CD8-positive, alpha-beta memory T cell (primary cell): ENCODE measurements at regions of chr11 and their contacts with region 1.

Region 1: GRCh38 chr11:114262681-114263512 is 33.3 kb upstream of the NNMT start:
- DNase-seq: peak in 3 of 5 donors; percentile 17 to 58 (median 21)
- H3K4me3 ChIP-seq: no peak overlapping the region
- H3K4me3 Mint-ChIP-seq: no peak overlapping the region
- H3K27ac ChIP-seq: no peak overlapping the region
- H3K27ac Mint-ChIP-seq: no peak overlapping the region
- H3K4me1 ChIP-seq: no peaks in the 10 kb centered on the region
- H3K4me1 Mint-ChIP-seq: peaks cover 0 to 6% (median 4%) of the 10 kb centered on the region in 3 donors
- H3K27me3 ChIP-seq: no peaks in the 10 kb centered on the region
- H3K27me3 Mint-ChIP-seq: peaks cover 4 to 6% of the 10 kb centered on the region in 2 donors

Region 2: GRCh38 chr11:113896156-113896879 is 366.6 kb before region 1 on chr11:
- CTCF ChIA-PET with region 1: interaction called, 152 read pairs
- POLR2A ChIA-PET with region 1: no interaction called
- DNase-seq: peak in 2 of 5 donors; percentile 11 to 18
- H3K4me3 ChIP-seq: no peak overlapping the region
- H3K4me3 Mint-ChIP-seq: peak overlapping the region in 1 of 7 donors; percentile 27
- H3K27ac ChIP-seq: no peak overlapping the region
- H3K27ac Mint-ChIP-seq: no peak overlapping the region
- H3K4me1 ChIP-seq: no peaks in the 10 kb centered on the region
- H3K4me1 Mint-ChIP-seq: peaks cover 2 to 5% (median 4%) of the 10 kb centered on the region in 3 donors
- H3K27me3 ChIP-seq: no peaks in the 10 kb centered on the region
- H3K27me3 Mint-ChIP-seq: peaks cover 0 to 2% of the 10 kb centered on the region in 2 donors

Region 3: DNA sequence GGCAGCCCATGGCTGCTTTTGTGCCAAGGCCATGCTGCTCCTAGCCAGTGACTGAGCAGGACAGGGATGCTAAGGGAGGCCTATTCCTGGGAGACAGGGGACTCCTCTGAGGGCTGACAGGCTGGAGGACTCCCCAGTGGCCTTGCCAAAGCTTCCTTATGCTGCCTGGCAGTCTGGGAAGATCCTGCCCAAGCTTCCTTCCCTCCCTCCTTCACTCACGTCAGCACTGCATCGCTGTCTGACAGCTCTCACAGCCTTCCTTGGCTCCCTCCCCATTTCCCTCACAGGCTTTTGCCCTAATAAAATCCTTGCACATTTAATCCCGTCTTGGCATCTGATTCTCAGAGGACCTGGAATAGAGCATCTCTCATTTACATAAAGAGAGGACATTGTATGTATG is 261.5 kb before region 1 on chr11:
- CTCF ChIA-PET with region 1: interaction called, 149 read pairs
- POLR2A ChIA-PET with region 1: no interaction called
- DNase-seq: no peak
- H3K4me3 ChIP-seq: no peak overlapping the region
- H3K4me3 Mint-ChIP-seq: no peak overlapping the region
- H3K27ac ChIP-seq: no peak overlapping the region
- H3K27ac Mint-ChIP-seq: no peak overlapping the region
- H3K4me1 ChIP-seq: no peaks in the 10 kb centered on the region
- H3K4me1 Mint-ChIP-seq: no peaks in the 10 kb centered on the region
- H3K27me3 ChIP-seq: no peaks in the 10 kb centered on the region
- H3K27me3 Mint-ChIP-seq: peaks cover 10 to 12% of the 10 kb centered on the region in 2 donors

Region 4: DNA sequence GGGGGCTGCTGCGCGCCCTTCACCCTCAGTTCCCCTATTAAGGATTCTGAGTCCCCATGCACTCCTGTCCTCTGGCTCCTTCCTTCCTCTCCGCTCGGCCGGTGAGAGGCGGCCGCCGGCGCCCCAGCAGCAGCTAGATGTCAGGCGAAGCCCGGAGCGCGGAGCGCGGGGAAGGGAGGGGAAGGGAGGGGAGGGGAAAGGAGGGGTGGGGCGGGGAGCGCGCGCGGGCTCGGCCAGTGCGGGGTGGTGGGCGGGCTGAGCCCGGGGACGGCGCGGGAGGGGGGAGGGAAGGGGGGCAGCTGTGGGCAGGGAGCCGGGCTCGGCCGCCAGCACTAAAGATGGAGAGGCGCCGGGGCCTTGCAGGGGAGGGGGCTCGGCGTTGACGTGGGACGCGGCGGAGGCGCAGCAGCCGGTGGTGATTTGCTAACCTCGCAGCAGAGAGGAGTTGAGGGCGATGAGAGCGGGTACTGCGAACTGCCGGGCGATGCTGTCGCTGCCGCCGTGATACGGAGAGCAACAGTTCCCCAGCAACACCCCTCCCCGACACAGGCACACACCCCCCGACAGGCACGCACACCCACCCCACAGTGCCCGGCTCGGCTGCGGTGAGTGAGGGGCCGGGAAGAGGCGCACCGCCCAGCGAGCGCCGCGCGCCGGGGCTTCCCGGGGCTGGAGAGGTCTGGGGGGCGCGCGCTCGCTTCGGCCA is 203.5 kb before region 1 on chr11 and contains the start of gene ZBTB16:
- CTCF ChIA-PET with region 1: interaction called, 15 read pairs
- POLR2A ChIA-PET with region 1: no interaction called
- DNase-seq: peak; percentile 38 to 71 (median 68)
- H3K4me3 ChIP-seq: peak within 1 kb of the TSS; percentile 69
- H3K4me3 Mint-ChIP-seq: peak within 1 kb of the TSS; percentile 88 to 96 (median 95)
- H3K27ac ChIP-seq: peak within 1 kb of the TSS; percentile 43
- H3K27ac Mint-ChIP-seq: peak within 1 kb of the TSS; percentile 23 to 98 (median 92)
- H3K4me1 ChIP-seq: peaks cover 8% of the 10 kb centered on the region
- H3K4me1 Mint-ChIP-seq: peaks cover 14 to 24% (median 16%) of the 10 kb centered on the region in 3 donors
- H3K27me3 ChIP-seq: peaks cover 15% of the 10 kb centered on the region
- H3K27me3 Mint-ChIP-seq: peaks cover 18 to 24% of the 10 kb centered on the region in 2 donors
- total RNA-seq, gene ZBTB16: 2.1 to 2.2 TPM

Region 5: GRCh38 chr11:114166897-114167323 is 96.0 kb before region 1 on chr11:
- CTCF ChIA-PET with region 1: interaction called, 19 read pairs
- POLR2A ChIA-PET with region 1: no interaction called
- DNase-seq: peak in 3 of 5 donors; percentile 30 to 63 (median 54)
- H3K4me3 ChIP-seq: peak overlapping the region; percentile 19
- H3K4me3 Mint-ChIP-seq: peak overlapping the region; percentile 33 to 89 (median 57)
- H3K27ac ChIP-seq: no peak overlapping the region
- H3K27ac Mint-ChIP-seq: peak overlapping the region; percentile 43 to 91 (median 86)
- H3K4me1 ChIP-seq: peaks cover 79% of the 10 kb centered on the region
- H3K4me1 Mint-ChIP-seq: peaks cover 91 to 99% (median 94%) of the 10 kb centered on the region in 3 donors
- H3K27me3 ChIP-seq: no peaks in the 10 kb centered on the region
- H3K27me3 Mint-ChIP-seq: peaks cover 0 to 2% of the 10 kb centered on the region in 2 donors

Region 6: DNA sequence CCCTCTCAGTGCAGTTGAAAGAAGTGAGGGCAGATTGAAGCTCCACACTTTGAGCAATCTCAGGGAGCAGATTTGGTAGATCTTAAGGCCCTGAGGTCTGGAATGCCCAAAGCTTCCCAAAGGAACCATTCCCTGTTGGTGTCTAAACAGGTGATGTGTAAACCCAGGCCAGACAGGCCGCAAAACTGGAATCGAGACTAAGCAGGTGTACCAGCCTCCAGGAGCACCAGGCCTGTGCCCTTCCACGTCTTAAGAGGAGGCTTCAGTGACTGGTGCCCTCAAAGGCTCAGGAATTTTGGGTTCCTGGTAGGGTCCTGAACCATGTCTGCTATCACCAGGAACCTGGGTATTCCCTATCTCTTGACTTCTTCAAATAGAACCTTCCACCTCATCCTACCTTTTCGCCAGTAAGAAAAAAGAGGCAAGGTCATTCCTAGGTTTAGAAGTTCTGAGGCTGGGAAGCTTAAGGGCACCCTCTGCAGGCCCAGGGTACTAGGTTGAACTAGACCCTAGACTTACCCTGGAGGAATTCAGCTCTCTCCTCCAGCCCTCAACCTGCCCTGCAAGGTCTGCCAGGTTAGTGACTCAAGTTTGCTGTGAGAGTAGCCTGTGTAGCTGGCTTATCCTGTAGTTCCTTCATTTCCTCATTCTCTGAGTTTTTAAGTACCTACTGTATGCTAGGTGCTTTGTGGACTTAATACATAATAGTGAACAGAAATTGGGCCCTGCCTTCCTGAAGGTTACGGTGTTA is 66.7 kb before region 1 on chr11:
- CTCF ChIA-PET with region 1: interaction called, 26 read pairs
- POLR2A ChIA-PET with region 1: no interaction called
- DNase-seq: peak in 2 of 5 donors; percentile 32 to 53
- H3K4me3 ChIP-seq: no peak overlapping the region
- H3K4me3 Mint-ChIP-seq: no peak overlapping the region
- H3K27ac ChIP-seq: no peak overlapping the region
- H3K27ac Mint-ChIP-seq: peak overlapping the region in 7 of 8 donors; percentile 72 to 99 (median 94)
- H3K4me1 ChIP-seq: peaks cover 9% of the 10 kb centered on the region
- H3K4me1 Mint-ChIP-seq: peaks cover 22 to 35% (median 27%) of the 10 kb centered on the region in 3 donors
- H3K27me3 ChIP-seq: no peaks in the 10 kb centered on the region
- H3K27me3 Mint-ChIP-seq: peaks cover 0 to 1% of the 10 kb centered on the region in 2 donors

Region 7: GRCh38 chr11:114275280-114275679 is 12.4 kb after region 1 on chr11:
- CTCF ChIA-PET with region 1: interaction called, 10 read pairs
- POLR2A ChIA-PET with region 1: no interaction called
- DNase-seq: no peak
- H3K4me3 ChIP-seq: no peak overlapping the region
- H3K4me3 Mint-ChIP-seq: no peak overlapping the region
- H3K27ac ChIP-seq: no peak overlapping the region
- H3K27ac Mint-ChIP-seq: peak overlapping the region in 1 of 8 donors; percentile 1
- H3K4me1 ChIP-seq: no peaks in the 10 kb centered on the region
- H3K4me1 Mint-ChIP-seq: no peaks in the 10 kb centered on the region
- H3K27me3 ChIP-seq: no peaks in the 10 kb centered on the region
- H3K27me3 Mint-ChIP-seq: peaks cover 29 to 71% of the 10 kb centered on the region in 2 donors